MCF 10A (cell line): ENCODE measurements at regions of chr13 and their contacts with region 1.

Region 1: DNA sequence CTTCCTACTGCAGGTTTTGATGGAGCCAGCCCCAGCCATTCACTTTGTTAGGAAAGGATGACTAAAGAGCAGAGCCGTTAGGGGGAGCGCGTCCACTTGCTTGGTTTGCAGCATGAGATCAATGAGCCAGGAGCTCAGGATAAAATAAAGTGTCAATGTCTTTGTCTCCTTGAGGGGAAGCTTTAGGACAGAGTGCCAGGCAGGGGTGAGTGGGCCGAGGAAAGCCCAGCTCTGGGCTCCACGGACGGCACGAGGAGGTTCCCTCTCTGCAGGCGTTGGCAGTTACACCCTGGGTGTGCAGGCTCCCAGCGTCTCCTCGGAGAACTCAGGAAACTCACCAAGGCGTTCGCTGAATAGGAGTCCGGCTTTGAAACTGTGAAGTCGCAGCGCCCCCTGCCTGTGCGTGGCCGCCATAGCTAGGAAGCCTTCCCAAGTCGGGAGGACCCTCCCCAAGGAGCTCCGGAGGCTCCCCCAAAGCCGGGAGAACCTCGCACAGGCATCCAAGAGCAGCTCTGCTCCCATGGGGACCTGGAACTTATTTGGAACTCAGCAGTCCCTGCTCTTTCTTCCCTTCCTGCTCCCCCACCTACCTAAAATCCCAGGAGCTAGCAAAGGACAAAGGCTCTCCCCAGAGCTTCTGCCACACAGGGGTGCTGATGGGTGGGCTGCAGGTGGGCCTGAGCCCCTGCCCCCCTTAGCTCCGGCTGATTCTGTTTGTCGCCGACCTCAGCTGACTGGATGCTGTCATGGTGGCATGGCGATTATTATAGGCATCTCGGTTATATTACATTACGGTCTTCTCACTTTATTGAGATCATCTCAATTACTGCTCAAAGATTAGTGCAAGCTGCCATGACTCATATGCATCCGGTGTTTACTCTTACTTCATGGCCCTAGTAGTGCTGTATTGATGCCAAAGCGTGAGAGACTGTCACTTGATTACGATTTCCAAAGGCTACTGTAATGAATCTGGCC is 34.4 kb downstream of the GSX1 start:
- DNase-seq: peak; percentile 87
- H3K4me3 Mint-ChIP-seq: peak overlapping the region; percentile 66
- H3K27ac Mint-ChIP-seq: peak overlapping the region; percentile 66
- H3K4me1 Mint-ChIP-seq: peaks cover 21% of the 10 kb centered on the region
- H3K27me3 Mint-ChIP-seq: peaks cover 29% of the 10 kb centered on the region
- CTCF ChIP-seq: peak; percentile 95

Region 2: DNA sequence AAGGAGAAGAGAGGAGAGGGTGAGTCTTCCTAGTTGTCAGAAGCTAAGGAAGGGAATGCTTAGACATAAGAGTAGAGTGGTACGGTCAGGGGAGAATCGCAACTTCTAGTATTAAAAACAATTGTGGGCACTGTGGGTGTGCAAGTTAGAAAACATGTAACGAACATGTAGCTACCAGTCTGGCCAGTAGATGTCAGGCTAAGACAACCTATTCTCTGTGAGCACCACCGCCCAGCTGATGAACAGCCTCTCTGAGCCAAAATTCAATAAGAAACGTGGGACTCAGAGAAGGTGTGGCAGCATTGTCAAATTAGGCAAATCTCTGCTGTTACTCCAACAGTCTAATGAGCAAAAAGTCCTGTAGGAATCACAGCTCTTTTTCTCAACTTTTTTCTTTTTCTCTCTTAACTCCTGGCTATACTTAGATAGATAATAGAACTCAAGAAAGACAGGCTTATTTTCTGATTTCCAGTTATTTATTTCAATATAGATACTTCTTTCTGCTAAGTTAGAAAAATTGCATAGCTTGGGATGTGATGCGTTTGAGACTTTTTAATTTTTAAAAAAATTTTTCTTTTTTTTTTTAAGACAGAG is 841.3 kb before region 1 on chr13:
- CTCF ChIA-PET with region 1: interaction called, 12 read pairs
- POLR2A ChIA-PET with region 1: no interaction called
- intact Hi-C with region 1: no loop called
- DNase-seq: peak; percentile 85
- H3K4me3 Mint-ChIP-seq: no peak overlapping the region
- H3K27ac Mint-ChIP-seq: no peak overlapping the region
- H3K4me1 Mint-ChIP-seq: peaks cover 18% of the 10 kb centered on the region
- H3K27me3 Mint-ChIP-seq: peaks cover 7% of the 10 kb centered on the region
- CTCF ChIP-seq: peak; percentile 81

Region 3: DNA sequence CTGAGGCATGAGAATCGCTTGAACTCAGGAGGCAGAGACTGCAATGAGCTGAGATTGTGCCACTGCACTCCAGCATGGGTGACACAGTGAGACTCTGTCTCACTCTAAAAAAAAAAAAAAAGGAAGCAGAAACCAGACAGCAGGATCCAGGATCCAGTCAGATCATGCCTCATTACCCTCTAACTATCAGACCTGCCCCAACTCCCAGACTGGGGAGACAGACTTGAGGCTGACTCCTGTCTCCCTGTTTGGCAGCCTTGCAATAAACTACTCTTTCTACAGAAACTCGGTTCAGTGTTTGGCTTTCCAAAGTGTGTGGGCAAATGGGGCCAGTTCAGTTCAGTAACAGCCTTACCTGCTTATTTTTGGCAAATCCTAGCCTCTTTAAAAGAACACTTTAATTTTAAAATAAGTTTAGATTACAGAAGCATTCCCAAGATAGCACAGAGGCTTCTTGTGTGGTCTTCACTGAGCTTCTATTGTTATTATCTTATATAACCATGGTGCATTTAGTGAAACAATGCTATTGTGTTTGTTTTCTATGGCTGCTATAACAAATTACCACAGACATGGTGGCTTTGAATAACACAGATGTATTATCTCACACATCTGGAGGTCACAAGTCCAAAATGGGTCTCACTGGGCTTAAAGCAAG is 537.5 kb before region 1 on chr13:
- CTCF ChIA-PET with region 1: no interaction called
- POLR2A ChIA-PET with region 1: no interaction called
- intact Hi-C with region 1: no loop called
- DNase-seq: no peak
- H3K4me3 Mint-ChIP-seq: no peak overlapping the region
- H3K27ac Mint-ChIP-seq: no peak overlapping the region
- H3K4me1 Mint-ChIP-seq: no peaks in the 10 kb centered on the region
- H3K27me3 Mint-ChIP-seq: peaks cover 15% of the 10 kb centered on the region
- CTCF ChIP-seq: no peak

Region 4: DNA sequence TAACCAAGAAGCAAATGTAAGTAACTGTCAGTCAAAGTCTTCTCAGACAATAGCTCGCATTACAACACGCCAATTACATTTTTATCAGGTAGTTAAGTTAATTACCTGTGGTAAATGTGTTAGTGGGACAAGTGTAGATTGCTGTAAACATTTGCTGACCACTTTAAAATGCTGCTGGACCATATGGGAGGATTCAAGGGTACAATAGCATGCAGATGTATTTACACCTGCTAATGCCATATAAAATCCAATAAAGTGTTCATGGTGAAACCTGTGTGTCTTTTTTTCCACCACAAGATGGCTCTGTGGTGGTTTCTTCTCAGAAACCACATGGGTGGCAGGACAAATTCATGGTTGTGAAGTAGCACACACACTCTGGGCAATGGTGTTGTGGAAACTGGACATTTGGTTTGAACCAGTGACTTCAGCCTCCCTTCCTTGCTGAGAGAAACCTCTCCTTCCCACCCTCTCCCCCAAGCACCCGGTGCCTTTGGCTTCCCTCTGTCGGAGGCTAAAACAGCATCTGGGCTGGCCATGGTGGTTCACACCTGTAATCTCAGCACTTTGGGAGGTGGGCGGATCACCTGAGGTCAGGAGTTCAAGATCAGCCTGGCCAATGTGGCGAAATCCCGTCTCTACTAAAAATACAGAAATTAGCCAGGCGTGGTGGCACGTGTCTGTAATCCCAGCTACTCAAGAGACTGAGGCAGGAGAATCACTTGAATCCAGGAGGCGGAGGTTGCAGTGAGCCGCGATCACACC is 420.3 kb before region 1 on chr13:
- CTCF ChIA-PET with region 1: interaction called, 26 read pairs
- POLR2A ChIA-PET with region 1: interaction called, 6 read pairs
- intact Hi-C with region 1: loop called (anchors 1 kb)
- DNase-seq: peak; percentile 55
- H3K4me3 Mint-ChIP-seq: no peak overlapping the region
- H3K27ac Mint-ChIP-seq: no peak overlapping the region
- H3K4me1 Mint-ChIP-seq: no peaks in the 10 kb centered on the region
- H3K27me3 Mint-ChIP-seq: peaks cover 45% of the 10 kb centered on the region
- CTCF ChIP-seq: peak; percentile 45

Region 5: DNA sequence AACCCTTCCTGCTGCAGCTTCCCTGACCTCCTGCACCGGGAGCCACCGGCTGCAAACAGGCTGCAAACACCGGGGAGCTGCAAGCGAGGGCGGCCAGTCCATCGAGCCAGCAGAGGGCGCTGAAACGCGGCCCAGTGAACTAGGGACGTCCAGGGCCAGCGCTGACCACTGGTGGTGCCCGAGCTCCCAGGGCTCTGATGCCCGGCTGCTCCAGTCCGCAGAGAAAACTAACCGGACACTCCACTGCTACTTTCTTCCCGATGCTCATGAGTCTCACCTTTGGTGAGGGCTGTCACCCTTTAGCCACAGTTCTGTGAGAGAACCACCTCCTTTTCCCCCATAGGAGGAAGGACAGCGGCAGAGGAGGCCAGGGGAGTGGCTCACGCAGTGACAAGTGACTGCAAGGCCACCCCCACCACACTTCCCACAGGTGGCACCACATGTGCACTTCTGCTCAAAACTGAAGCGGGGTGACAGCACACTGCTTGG is 293.5 kb before region 1 on chr13:
- CTCF ChIA-PET with region 1: interaction called, 33 read pairs
- POLR2A ChIA-PET with region 1: interaction called, 4 read pairs
- intact Hi-C with region 1: loop called (anchors 1 kb)
- DNase-seq: peak; percentile 74
- H3K4me3 Mint-ChIP-seq: no peak overlapping the region
- H3K27ac Mint-ChIP-seq: no peak overlapping the region
- H3K4me1 Mint-ChIP-seq: peaks cover 8% of the 10 kb centered on the region
- H3K27me3 Mint-ChIP-seq: no peaks in the 10 kb centered on the region
- CTCF ChIP-seq: peak; percentile 80

Region 6: GRCh38 chr13:27578121-27579030 is 248.3 kb before region 1 on chr13:
- CTCF ChIA-PET with region 1: no interaction called
- POLR2A ChIA-PET with region 1: no interaction called
- intact Hi-C with region 1: no loop called
- DNase-seq: peak; percentile 53
- H3K4me3 Mint-ChIP-seq: no peak overlapping the region
- H3K27ac Mint-ChIP-seq: peak overlapping the region; percentile 69
- H3K4me1 Mint-ChIP-seq: peaks cover 10% of the 10 kb centered on the region
- H3K27me3 Mint-ChIP-seq: no peaks in the 10 kb centered on the region
- CTCF ChIP-seq: no peak

Region 7: GRCh38 chr13:27678306-27679040 is 148.2 kb before region 1 on chr13:
- CTCF ChIA-PET with region 1: interaction called, 17 read pairs
- POLR2A ChIA-PET with region 1: interaction called, 11 read pairs
- intact Hi-C with region 1: no loop called
- DNase-seq: peak; percentile 65
- H3K4me3 Mint-ChIP-seq: no peak overlapping the region
- H3K27ac Mint-ChIP-seq: peak overlapping the region; percentile 24
- H3K4me1 Mint-ChIP-seq: peaks cover 15% of the 10 kb centered on the region
- H3K27me3 Mint-ChIP-seq: no peaks in the 10 kb centered on the region
- CTCF ChIP-seq: no peak

Region 8: GRCh38 chr13:27851049-27851850 is 24.6 kb after region 1 on chr13:
- CTCF ChIA-PET with region 1: interaction called, 16 read pairs
- POLR2A ChIA-PET with region 1: no interaction called
- intact Hi-C with region 1: no loop called
- DNase-seq: peak; percentile 57
- H3K4me3 Mint-ChIP-seq: no peak overlapping the region
- H3K27ac Mint-ChIP-seq: no peak overlapping the region
- H3K4me1 Mint-ChIP-seq: peaks cover 11% of the 10 kb centered on the region
- H3K27me3 Mint-ChIP-seq: no peaks in the 10 kb centered on the region
- CTCF ChIP-seq: no peak

Region 9: DNA sequence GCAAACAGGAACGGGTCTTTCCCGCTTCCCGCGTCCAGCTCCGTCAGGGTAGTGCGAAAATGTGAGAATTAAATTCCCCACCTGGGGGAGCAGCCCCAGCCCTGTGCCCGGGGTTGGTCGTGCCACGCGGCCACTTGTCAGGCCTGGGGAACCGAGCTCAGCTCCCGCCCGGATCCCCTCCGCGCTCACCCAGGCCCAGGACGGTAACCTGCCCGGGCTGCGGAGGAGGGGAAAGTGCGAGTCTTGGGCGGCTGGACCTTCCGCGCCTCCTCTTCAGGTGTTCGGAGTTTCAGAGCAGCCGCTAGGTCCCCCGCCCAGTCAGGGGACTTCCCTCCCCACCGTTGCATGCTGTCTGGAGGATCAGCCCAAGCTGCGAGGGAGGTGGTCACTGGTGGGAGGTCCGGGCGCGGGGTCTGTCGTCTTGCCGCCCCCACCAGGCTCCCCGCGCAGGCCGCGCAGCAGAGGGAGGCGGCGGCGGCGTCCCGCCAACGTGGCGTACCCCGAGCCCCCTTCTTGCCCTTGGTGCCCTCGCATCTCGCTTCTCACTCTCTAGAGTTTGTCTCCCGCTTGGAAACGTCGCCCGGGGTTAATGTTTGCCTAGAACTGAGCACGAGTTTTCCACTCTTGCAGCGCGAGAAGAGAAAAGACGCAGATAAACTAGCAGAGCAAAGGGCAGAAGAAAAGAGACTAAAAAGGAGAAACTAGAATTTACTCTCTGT is 153.8 kb after region 1 on chr13:
- CTCF ChIA-PET with region 1: interaction called, 173 read pairs
- POLR2A ChIA-PET with region 1: interaction called, 7 read pairs
- intact Hi-C with region 1: loop called (anchors 1 kb)
- DNase-seq: no peak
- H3K4me3 Mint-ChIP-seq: no peak overlapping the region
- H3K27ac Mint-ChIP-seq: no peak overlapping the region
- H3K4me1 Mint-ChIP-seq: peaks cover 7% of the 10 kb centered on the region
- H3K27me3 Mint-ChIP-seq: peaks cover 77% of the 10 kb centered on the region
- CTCF ChIP-seq: no peak